ENCODE measurements at regions of chr5 and their contacts with region 1.

Region 1: DNA sequence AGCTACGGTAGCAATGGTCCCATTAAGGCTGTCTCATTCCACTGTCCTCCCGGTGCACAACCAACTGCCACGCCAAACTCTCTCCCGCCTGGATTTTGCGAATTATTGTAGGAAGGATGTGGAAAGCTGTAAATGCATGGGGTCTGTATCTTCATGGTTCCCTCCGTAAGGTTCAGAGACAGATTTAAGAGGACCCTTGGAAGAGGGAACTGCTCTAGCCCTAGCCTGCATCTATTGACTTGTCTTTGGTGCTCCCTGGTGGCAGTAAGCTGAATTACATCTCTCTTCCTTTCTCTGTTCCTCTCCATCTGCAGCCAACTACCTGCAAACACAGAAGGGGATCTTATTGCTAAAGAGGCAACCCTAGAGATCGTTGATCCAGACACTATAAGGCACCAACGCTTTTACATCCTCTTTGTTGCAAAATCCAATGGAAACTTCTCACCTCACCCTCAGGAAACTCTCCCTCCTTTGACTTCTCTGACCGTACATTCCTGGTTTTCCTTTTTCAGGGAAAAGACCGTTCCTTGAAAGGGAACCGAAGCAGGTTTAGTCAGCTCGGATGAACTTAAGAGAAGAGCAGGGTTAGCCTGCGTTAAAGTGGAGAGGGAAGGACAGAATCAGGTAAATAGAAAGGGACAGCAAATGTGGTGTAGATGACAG is 11.9 kb downstream of the CAPSL start:
- DNase-seq: peak; percentile 57
- H3K4me3 Mint-ChIP-seq: no peak overlapping the region
- H3K27ac Mint-ChIP-seq: no peak overlapping the region
- H3K4me1 Mint-ChIP-seq: peaks cover 38% of the 10 kb centered on the region
- H3K27me3 Mint-ChIP-seq: peaks cover 3% of the 10 kb centered on the region

Region 2: GRCh38 chr5:34838785-34839714 is 1087.5 kb before region 1 on chr5 and contains the start of gene TTC23L:
- intact Hi-C with region 1: loop called (anchors 10 kb)
- DNase-seq: peak; percentile 88
- H3K4me3 Mint-ChIP-seq: peak within 1 kb of the TSS; percentile 93
- H3K27ac Mint-ChIP-seq: peak within 1 kb of the TSS; percentile 81
- H3K4me1 Mint-ChIP-seq: peaks cover 15% of the 10 kb centered on the region
- H3K27me3 Mint-ChIP-seq: peaks cover 11% of the 10 kb centered on the region
- total RNA-seq, gene TTC23L: not detected in 2 replicates

Region 3: DNA sequence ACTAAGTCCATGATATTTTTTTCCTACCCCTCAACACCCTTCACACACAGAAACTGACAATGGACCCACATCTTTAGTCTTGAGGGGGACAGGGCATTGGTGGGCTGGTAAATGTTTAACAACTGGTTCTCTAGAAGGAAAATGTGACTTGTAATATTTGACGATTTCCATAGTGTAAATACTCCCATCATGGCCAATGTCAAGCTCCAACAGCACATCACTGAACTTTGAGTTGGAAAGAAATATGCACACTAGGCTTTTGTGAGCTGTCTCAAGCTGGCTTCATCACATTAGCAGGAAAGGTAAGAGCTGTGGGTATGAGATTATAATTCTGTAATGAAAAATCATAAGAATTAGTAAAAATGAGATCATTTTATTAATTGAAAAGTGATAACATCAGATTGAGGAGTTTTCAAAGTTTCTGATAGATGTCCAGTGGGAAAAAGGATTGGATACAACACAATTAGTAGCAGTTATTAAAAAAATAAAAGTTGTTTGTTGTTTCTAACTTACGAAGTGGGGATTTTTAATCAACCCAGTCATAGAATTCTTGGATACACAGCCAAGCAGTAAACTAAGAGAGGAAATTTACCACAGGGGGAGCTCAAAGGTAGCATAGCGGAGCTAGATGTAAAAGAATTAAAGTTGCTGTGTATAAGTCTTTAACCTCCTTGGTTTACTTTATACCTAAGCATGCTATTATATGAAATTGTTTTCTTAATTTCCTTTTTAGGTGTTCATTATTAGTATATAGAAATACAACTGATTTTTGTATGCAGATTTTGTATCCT is 506.1 kb before region 1 on chr5:
- intact Hi-C with region 1: loop called (anchors 5 kb)
- DNase-seq: no peak
- H3K4me3 Mint-ChIP-seq: no peak overlapping the region
- H3K27ac Mint-ChIP-seq: no peak overlapping the region
- H3K4me1 Mint-ChIP-seq: no peaks in the 10 kb centered on the region
- H3K27me3 Mint-ChIP-seq: peaks cover 6% of the 10 kb centered on the region

Region 4: GRCh38 chr5:35617435-35618303 is 308.9 kb before region 1 on chr5 and contains the start of gene SPEF2:
- intact Hi-C with region 1: loop called (anchors 1 kb)
- DNase-seq: peak; percentile 71
- H3K4me3 Mint-ChIP-seq: peak within 1 kb of the TSS; percentile 92
- H3K27ac Mint-ChIP-seq: peak within 1 kb of the TSS; percentile 94
- H3K4me1 Mint-ChIP-seq: peaks cover 53% of the 10 kb centered on the region
- H3K27me3 Mint-ChIP-seq: no peaks in the 10 kb centered on the region
- total RNA-seq, gene SPEF2: 4.5 and 4.6 TPM in 2 replicates

Region 5: DNA sequence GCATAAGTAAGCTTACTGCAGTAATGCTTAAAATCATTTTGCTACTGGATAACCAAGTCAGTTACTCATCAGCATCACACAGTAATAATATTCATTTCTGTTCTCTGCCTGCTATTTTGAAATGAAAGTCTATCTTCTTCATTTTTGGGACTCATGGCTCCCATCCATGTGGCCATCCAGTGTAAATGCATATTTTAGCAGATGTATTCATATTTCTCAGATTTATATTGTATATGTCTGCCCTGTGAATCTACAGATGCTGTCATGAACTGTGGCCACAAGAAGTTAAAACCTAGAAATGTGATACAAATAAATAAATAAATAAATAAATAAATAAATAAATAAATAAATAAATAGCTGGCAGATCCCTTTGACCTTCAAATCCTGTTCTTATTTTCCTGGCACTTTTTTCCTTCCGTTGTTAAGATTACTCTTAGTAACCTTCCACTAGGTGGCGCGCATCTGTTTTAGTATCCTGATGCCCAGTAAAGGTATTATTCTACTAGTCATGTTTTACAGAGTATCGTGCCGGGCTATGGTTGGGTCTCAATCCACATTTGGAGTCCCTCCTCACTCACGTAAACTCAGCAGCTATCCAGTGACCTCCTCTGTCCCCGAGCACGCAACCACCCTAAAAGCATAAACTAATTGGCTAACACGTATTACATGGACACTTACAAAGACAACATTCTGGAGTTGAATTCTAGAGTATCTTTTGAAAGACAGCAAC is 149.0 kb before region 1 on chr5:
- intact Hi-C with region 1: loop called (anchors 1 kb)
- DNase-seq: peak; percentile 53
- H3K4me3 Mint-ChIP-seq: no peak overlapping the region
- H3K27ac Mint-ChIP-seq: peak overlapping the region; percentile 30
- H3K4me1 Mint-ChIP-seq: peaks cover 70% of the 10 kb centered on the region
- H3K27me3 Mint-ChIP-seq: no peaks in the 10 kb centered on the region

Region 6: GRCh38 chr5:35838370-35839042 is 88.0 kb before region 1 on chr5:
- intact Hi-C with region 1: loop called (anchors 1 kb)
- DNase-seq: no peak
- H3K4me3 Mint-ChIP-seq: no peak overlapping the region
- H3K27ac Mint-ChIP-seq: peak overlapping the region; percentile 65
- H3K4me1 Mint-ChIP-seq: peaks cover 60% of the 10 kb centered on the region
- H3K27me3 Mint-ChIP-seq: no peaks in the 10 kb centered on the region

Region 7: DNA sequence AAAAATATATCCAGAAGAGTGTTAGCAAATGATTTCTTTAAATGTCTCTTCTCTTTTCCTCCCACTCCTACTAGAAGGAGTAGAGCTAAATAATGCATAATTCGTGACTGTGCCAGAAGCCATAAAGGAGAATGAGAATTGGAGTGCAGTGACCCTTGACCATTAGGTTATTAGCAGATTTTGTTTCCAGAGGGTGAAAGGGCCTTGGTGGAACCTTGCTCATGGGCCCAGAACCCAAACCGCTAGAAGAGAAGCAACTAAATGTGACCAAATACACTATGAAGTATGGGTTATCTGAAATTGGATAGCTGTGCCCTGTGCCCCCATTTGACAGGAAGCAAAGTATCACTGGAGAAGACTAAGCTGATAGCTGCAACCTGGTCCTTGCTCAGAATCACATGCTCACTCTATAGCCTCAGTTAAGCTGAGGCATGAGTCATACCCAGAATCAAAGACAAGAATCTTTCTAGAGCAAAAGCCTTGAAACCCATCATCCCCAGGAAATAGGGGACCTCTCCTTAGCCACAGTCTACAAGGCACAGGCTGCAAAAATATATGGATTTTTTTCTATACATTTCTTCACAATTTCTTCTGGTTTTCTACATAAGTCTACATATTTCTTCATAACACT is 24.4 kb before region 1 on chr5:
- intact Hi-C with region 1: loop called (anchors 1 kb)
- DNase-seq: peak; percentile 50
- H3K4me3 Mint-ChIP-seq: peak overlapping the region; percentile 2
- H3K27ac Mint-ChIP-seq: peak overlapping the region; percentile 37
- H3K4me1 Mint-ChIP-seq: peaks cover 82% of the 10 kb centered on the region
- H3K27me3 Mint-ChIP-seq: peaks cover 7% of the 10 kb centered on the region